ENCODE measurements at regions of chr21 and their contacts with region 1.

Region 1: DNA sequence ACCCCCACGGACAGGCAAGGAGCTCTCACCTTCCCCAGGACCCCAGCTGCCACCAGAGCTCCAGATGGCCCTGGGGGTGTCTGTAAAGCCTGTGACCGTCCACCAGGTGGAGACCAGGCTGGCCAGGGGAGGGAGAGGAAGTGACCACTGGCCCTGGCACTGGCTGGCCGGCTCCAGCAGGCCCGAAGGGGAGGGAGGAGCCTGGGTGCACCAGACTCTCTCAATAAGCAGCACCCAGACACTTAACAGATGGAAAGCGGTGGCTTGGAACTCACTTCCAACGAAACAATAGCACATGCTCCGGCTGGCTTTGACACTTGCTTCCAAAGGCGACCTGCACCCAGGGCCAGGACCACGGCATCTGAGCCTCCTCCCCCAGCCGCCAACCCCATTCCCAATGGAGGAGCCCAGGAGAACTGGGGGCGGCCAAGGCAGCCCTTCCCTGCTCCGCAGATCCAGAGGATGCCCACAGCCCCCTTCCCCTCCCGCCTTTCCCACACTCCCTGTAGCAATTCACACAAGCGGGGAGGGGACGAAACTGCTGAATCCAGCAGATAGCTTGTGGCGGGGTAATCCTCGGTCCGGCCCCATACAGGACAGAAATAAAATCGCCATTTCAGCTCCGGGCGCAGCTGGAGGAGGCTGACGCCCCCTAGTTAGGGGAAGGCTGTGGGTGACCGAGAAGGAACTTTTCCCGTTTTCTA is 742 bp upstream of the PDE9A start:
- DNase-seq: peak; percentile 29
- H3K4me3 ChIP-seq: no peak overlapping the region
- H3K27ac ChIP-seq: no peak overlapping the region
- H3K4me1 ChIP-seq: peaks cover 6% of the 10 kb centered on the region
- H3K27me3 ChIP-seq: peaks cover 27% of the 10 kb centered on the region
- CTCF ChIP-seq: peak; percentile 10 to 40

Region 2: DNA sequence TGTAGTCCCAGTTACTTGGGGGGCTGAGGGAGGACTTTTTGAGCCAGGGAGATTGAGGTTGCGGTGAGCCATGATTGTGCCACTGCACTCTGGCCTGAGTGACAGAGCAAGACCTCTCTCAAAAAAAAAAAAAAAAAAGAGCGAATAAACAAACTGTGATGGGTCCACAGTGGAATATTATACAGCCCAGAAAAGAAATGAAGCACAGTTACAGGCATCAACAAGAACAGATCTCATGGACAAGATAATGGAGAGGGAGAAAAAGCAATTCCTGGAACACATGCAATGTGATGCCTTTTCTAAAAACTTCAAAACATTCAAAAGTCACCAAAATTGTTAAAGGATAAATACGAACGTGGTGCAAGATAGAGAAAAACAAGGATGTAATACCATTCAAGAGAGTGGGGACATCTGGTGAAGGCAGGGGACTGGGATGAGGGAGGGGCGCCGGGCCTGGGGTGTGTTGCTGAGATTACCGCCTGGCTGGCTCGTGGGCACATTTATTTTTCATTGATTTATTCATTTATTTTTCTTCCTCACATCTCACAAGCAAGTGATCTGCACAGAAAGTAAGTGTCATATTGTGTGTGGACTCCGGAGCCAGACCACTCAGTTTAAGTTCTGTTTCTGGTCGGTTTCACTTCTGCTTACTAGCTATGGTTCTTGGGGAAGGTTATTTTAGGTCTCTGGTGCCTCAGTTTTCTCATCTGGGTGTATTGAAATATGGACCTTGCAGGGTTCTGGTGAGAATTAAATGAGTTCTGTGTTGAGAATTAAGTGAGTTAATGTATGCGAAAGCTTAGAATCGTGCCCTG is 403.7 kb before region 1 on chr21:
- CTCF ChIA-PET with region 1: no interaction called
- dilution Hi-C with region 1: no loop called
- in situ Hi-C with region 1: no loop called
- intact Hi-C with region 1: no loop called
- DNase-seq: no peak
- H3K4me3 ChIP-seq: no peak overlapping the region
- H3K27ac ChIP-seq: no peak overlapping the region
- H3K4me1 ChIP-seq: no peaks in the 10 kb centered on the region
- H3K27me3 ChIP-seq: no peaks in the 10 kb centered on the region
- CTCF ChIP-seq: no peak

Region 3: GRCh38 chr21:42320791-42321190 is 331.9 kb before region 1 on chr21:
- CTCF ChIA-PET with region 1: no interaction called
- dilution Hi-C with region 1: no loop called
- in situ Hi-C with region 1: no loop called
- intact Hi-C with region 1: no loop called
- DNase-seq: no peak
- H3K4me3 ChIP-seq: no peak overlapping the region
- H3K27ac ChIP-seq: no peak overlapping the region
- H3K4me1 ChIP-seq: no peaks in the 10 kb centered on the region
- H3K27me3 ChIP-seq: no peaks in the 10 kb centered on the region
- CTCF ChIP-seq: no peak

Region 4: DNA sequence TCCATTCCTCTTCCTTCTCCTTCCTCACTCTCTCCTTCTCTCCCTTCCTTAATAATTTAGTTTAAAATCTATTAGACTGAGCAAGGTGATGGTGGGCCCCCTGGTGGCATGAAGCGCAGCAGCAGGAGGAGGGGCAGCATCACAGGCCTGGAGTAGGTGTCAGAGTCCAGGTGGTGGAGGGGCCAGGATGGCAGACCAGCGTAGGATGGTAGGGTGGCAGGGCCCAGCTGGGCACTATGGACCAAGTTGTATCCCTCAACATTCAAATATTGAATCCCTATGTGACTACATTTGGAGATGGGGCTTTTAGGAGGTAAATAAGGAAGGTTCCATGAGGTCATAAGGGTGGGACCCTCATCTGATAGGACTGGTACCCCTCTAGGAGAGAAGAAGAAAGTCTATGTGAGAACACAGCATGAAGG is 165.7 kb after region 1 on chr21:
- CTCF ChIA-PET with region 1: no interaction called
- dilution Hi-C with region 1: no loop called
- in situ Hi-C with region 1: no loop called
- intact Hi-C with region 1: loop called (anchors 2 kb)
- DNase-seq: peak; percentile 45
- H3K4me3 ChIP-seq: no peak overlapping the region
- H3K27ac ChIP-seq: no peak overlapping the region
- H3K4me1 ChIP-seq: no peaks in the 10 kb centered on the region
- H3K27me3 ChIP-seq: no peaks in the 10 kb centered on the region
- CTCF ChIP-seq: peak; percentile 92 to 93

Region 5: GRCh38 chr21:43767984-43768867 is 1115.5 kb after region 1 on chr21:
- CTCF ChIA-PET with region 1: no interaction called
- dilution Hi-C with region 1: no loop called
- in situ Hi-C with region 1: no loop called
- intact Hi-C with region 1: no loop called
- DNase-seq: peak; percentile 87
- H3K4me3 ChIP-seq: no peak overlapping the region
- H3K27ac ChIP-seq: peak overlapping the region; percentile 58
- H3K4me1 ChIP-seq: peaks cover 33% of the 10 kb centered on the region
- H3K27me3 ChIP-seq: no peaks in the 10 kb centered on the region
- CTCF ChIP-seq: no peak

Measured in mammary epithelial cell (primary cell).